A673 (cell line): ENCODE measurements at regions of chr13 and their contacts with region 1.

Region 1: GRCh38 chr13:41193919-41194824 is at the start of gene KBTBD7:
- DNase-seq: peak; percentile 98
- H3K4me3 ChIP-seq: peak within 1 kb of the TSS; percentile 67
- H3K27ac ChIP-seq: peak within 1 kb of the TSS; percentile 89
- H3K4me1 ChIP-seq: no peaks in the 10 kb centered on the region
- H3K27me3 ChIP-seq: no peaks in the 10 kb centered on the region
- CTCF ChIP-seq: no peak
- total RNA-seq, gene KBTBD7: 10.2 and 10.8 TPM in 2 replicates

Region 2: GRCh38 chr13:40692946-40693345 is 501.2 kb before region 1 on chr13:
- CTCF ChIA-PET with region 1: no interaction called
- POLR2A ChIA-PET with region 1: no interaction called
- intact Hi-C with region 1: no loop called
- DNase-seq: peak; percentile 50
- H3K4me3 ChIP-seq: no peak overlapping the region
- H3K27ac ChIP-seq: no peak overlapping the region
- H3K4me1 ChIP-seq: no peaks in the 10 kb centered on the region
- H3K27me3 ChIP-seq: no peaks in the 10 kb centered on the region
- CTCF ChIP-seq: no peak

Region 3: DNA sequence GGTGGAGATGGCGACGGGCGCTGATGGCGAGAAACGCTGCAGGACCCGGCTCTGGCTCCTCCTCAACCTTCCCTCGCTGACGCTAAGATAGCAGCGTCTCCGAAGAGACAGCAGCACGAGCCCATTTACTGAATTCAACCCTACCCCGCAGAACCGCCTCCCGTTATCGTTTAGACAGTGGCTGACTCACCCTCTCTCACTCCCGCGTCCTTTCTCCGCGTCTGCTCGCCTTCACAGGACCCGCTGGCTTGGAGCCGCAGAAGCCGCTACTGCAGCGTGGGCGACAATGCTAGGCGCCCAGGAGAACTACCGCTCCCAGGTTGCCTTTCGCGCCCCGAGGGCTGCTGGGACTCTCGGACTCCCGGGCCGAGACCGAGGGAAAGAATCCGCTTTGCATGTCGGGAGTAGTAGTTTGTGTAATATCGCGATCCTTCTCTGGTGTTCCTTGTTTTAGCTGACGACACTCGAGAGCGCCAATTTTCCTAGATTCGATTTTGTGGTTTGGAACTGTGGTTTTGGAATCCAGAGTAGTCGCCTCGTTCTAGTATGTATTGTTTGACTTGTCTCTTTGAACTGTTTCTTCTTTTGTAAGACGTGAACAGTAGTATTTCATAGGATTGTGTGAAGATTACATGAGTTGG is 61.5 kb before region 1 on chr13 and contains the start of gene KBTBD6:
- CTCF ChIA-PET with region 1: no interaction called
- POLR2A ChIA-PET with region 1: no interaction called
- intact Hi-C with region 1: loop called (anchors 1 kb)
- DNase-seq: peak; percentile 100
- H3K4me3 ChIP-seq: peak within 1 kb of the TSS; percentile 61
- H3K27ac ChIP-seq: peak within 1 kb of the TSS; percentile 77
- H3K4me1 ChIP-seq: peaks cover 9% of the 10 kb centered on the region
- H3K27me3 ChIP-seq: no peaks in the 10 kb centered on the region
- CTCF ChIP-seq: no peak
- total RNA-seq, gene KBTBD6: 14.5 and 15.7 TPM in 2 replicates